ENCODE measurements at regions of chr5 and their contacts with region 1.

Region 1: DNA sequence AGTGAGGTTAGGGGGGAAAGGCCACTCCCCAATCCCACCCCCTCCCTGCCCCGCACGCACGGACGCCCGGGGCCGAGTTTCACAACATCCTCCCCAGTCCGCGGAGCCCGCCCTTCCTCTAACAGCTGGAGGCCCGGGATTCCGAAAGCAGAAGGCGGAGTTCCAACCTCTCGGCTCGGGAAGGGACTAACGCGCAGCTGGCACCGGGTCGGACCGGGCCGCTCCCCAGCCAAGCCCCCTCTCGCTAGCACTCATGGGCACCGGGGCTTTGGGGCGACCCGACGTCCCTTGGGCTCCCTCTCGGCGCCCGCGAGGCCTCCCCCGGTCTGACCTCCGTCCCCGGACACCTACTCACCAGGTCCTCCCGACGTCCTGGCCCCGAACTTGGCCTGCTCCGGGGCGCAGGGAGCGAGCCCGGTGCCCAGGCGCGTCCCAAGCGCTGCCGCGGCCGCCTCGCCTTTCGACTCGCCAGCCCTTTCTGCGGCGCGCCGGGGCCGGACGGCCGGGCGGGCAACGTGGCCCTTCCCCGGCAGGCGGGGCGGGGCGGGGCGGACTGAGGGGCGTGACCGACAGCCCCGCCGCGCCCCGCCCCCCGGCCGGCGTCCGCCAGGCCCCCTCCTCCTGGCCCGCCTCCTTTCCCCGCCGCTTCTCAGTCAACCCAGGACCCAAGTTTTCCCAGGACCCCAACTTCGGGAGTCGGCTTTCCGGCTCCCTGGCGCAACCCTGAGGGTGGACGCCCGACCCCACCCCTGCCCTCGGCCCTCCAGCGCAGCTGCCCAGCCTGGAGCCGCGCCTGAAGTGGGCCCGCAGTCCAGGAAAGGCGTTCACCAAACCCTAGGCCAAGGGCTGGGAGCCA is at the start of gene MGAT1:
- DNase-seq: peak; percentile 94
- H3K4me3 Mint-ChIP-seq: peak within 1 kb of the TSS; percentile 87
- H3K27ac Mint-ChIP-seq: peak within 1 kb of the TSS; percentile 88
- H3K4me1 Mint-ChIP-seq: peaks cover 77% of the 10 kb centered on the region
- H3K27me3 Mint-ChIP-seq: no peaks in the 10 kb centered on the region
- total RNA-seq, gene MGAT1: 119 and 122 TPM in 2 replicates

Region 2: GRCh38 chr5:179697993-179698934 is 1104.3 kb before region 1 on chr5:
- intact Hi-C with region 1: loop called (anchors 2 kb)
- DNase-seq: peak; percentile 100
- H3K4me3 Mint-ChIP-seq: peak overlapping the region; percentile 89
- H3K27ac Mint-ChIP-seq: peak overlapping the region; percentile 99
- H3K4me1 Mint-ChIP-seq: peaks cover 27% of the 10 kb centered on the region
- H3K27me3 Mint-ChIP-seq: no peaks in the 10 kb centered on the region

Region 3: DNA sequence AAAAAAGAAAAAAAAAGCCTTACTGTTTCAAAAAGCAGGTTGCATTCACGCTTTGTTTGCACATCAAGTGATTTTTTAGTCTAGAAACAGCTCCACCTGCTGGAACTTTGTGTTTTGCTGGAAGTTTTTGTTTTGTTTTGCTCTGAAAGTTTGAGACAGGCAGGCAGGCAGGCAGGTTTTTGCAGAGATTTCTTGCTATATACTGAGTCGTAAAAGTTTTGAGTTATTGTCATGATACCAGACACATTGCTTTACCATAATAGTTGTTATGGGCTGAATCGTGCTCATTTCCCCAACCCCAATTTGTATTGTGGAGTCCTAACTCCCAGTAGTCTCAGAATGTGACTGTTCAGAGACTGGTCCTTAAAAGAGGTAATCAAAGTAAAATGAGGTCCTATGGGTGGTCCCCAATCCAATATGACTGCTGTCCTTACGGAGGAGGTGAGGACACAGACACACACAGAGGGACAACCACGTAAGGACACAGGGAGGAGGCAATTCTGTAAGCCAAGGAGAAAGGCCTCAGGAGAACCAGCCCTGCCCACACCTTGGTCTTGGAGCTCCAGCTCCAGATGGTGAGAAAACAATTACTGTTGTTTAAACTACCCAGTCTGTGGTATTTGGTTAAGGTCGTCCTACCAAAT is 83.6 kb before region 1 on chr5:
- intact Hi-C with region 1: no loop called
- DNase-seq: peak; percentile 81
- H3K4me3 Mint-ChIP-seq: no peak overlapping the region
- H3K27ac Mint-ChIP-seq: no peak overlapping the region
- H3K4me1 Mint-ChIP-seq: peaks cover 13% of the 10 kb centered on the region
- H3K27me3 Mint-ChIP-seq: peaks cover 20% of the 10 kb centered on the region

Region 4: DNA sequence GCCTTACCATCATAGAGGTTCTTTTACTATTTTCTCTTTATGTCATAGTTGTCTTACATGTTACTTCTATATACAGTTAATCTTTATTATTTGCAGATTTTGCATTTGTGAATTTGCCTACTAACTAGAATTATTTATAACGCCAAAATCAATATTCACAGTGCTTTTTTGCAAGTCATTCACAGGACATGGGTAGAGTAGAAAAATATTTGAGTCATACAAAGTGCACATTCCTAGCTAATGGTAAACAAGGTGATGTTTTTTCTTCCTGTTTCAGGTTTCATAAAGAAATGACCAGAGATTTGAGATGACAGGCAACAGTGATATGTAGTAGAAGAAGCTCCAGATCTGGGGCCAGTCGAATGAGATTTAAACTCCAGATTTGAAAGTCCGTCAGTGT is 32.7 kb before region 1 on chr5:
- intact Hi-C with region 1: no loop called
- DNase-seq: no peak
- H3K4me3 Mint-ChIP-seq: no peak overlapping the region
- H3K27ac Mint-ChIP-seq: no peak overlapping the region
- H3K4me1 Mint-ChIP-seq: no peaks in the 10 kb centered on the region
- H3K27me3 Mint-ChIP-seq: peaks cover 16% of the 10 kb centered on the region

Region 5: DNA sequence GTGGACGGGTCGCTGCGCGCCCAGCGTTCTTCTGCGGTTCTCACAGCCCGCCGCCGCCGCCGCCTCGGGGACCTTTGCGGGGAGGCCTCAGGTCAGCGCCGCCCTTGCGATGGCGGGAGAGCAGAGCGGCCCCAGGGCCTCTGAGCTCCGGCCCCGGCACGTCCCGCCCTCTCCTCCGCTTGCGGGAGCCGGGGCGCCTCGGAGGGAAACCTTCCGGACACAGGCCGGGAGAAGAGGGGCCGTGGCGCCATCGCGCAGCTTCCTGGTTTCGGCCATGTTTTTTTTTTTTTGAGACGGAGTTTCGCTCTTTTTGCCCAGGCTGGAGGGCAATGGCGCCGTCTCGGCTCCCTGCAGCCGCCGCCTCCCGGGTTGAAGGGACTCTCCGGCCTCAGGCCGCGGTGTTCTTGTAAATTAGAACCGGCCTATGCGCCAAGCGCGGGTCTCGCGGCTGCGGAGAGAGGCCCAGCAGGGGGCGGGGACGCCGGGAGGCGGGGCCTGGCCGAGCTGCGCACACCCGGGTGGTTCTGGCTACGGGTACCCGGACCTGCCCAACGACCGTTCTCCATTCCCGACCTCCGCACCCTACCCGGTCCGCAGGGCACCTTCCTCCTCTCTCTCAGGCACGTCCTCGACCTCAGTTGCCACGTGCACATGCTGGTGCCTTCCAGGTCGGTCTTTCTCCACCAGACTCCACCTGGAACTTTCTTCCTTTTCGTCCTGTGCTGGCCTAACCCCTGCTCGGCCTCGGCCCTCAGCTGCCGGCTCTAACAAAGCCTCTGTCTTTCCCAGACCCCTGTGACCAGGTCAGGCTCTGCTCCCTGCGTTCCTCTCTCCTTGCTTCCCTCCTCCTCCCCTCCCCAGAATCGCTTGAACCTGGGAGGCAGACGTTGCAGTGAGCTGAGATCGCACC is 28.8 kb after region 1 on chr5:
- intact Hi-C with region 1: loop called (anchors 1 kb)
- DNase-seq: peak; percentile 94
- H3K4me3 Mint-ChIP-seq: peak overlapping the region; percentile 93
- H3K27ac Mint-ChIP-seq: peak overlapping the region; percentile 99
- H3K4me1 Mint-ChIP-seq: peaks cover 33% of the 10 kb centered on the region
- H3K27me3 Mint-ChIP-seq: no peaks in the 10 kb centered on the region

Region 6: GRCh38 chr5:181159286-181159829 is 356.8 kb after region 1 on chr5:
- intact Hi-C with region 1: loop called (anchors 2 kb)
- DNase-seq: peak; percentile 97
- H3K4me3 Mint-ChIP-seq: peak overlapping the region; percentile 60
- H3K27ac Mint-ChIP-seq: peak overlapping the region; percentile 85
- H3K4me1 Mint-ChIP-seq: peaks cover 30% of the 10 kb centered on the region
- H3K27me3 Mint-ChIP-seq: peaks cover 14% of the 10 kb centered on the region

Region 7: DNA sequence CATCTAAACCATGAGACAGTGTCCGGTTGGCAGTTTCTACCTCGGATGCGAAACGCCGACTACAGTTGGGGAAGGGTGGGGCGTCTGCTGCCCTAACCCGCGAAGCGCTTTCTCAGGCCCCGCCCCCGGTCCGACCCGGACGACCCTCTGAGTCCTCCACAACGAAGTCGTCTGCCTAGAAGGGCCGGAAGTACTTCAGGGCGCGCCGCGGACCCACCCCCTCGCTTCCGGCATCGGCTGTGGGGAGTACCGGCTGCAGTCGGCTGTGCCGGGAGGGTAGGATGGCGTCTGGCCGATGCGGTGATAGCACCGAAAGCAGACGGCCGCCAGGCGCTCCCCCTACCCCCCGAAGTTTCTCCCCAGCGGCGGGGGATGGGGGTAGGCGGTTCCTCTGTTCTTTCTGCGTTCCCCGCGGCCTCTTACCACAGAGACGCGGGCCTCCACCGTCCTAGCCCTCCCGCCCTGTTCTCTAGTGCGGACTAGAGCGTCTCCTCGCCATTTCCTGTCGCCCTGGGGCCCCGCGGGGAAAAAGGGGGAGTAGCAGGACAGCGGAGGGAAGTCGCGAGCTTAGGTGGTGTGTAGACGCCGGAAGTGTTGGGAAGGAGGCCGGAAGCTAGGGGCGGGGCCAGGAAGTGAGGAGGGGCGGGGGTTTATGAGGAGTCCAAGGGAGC is 420.6 kb after region 1 on chr5 and contains the start of gene TRIM41:
- intact Hi-C with region 1: loop called (anchors 1 kb)
- DNase-seq: peak; percentile 99
- H3K4me3 Mint-ChIP-seq: peak within 1 kb of the TSS; percentile 98
- H3K27ac Mint-ChIP-seq: peak within 1 kb of the TSS; percentile 99
- H3K4me1 Mint-ChIP-seq: peaks cover 53% of the 10 kb centered on the region
- H3K27me3 Mint-ChIP-seq: peaks cover 5% of the 10 kb centered on the region
- total RNA-seq, gene TRIM41: 31.6 and 35.2 TPM in 2 replicates

Measured in activated CD4-positive, alpha-beta T cell treated with anti-CD3 and anti-CD28 coated beads, Interleukin-2, amount 10 ng/mL, durations not matched to agents 24 days and 14 days (primary cell).